ENCODE measurements at regions of chr2 and their contacts with region 1.

Region 1: DNA sequence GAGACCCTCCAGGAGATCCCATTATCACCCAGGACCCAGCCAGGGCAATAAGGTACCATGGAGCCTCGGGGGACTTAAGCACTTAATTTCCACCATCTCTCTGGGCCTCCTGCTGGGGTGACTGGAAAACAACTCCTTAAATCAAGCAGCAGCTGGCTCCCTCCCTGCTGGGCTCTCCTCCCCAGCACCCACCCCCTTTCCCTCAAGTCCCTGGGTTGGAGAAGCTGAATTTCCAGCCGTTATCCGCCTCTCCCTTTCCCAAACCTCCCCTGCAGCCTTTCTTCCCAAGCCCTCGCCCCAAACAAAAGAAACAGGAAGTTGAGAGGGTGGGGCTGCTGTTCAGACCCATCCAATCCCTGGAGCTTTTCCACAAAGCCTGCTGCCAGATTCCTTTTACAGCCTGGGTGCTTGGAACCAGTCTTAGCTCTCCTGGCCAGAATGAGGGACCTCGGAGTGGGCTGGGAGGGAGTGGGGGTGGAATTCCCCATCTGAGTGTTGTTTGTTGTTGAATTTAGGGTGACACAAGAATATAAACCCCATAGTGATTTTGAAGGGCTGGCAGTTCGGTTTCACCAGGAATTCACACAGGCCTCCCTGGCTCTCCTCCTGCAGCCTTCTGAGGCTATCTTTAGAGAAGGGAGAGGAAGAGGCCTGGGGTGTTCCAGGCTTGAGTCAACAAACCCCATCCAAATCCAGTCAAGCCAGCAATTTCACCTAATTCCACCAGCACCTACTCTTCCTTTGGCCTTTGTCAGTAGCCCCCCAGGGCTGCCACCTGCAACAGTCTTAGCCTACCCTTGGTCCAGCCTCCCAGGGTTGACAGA is 32.3 kb downstream of the MARCHF4 start:
- DNase-seq: peak; percentile 44
- H3K4me3 ChIP-seq: no peak overlapping the region
- H3K27me3 ChIP-seq: no peaks in the 10 kb centered on the region
- CTCF ChIP-seq: peak; percentile 42

Region 2: DNA sequence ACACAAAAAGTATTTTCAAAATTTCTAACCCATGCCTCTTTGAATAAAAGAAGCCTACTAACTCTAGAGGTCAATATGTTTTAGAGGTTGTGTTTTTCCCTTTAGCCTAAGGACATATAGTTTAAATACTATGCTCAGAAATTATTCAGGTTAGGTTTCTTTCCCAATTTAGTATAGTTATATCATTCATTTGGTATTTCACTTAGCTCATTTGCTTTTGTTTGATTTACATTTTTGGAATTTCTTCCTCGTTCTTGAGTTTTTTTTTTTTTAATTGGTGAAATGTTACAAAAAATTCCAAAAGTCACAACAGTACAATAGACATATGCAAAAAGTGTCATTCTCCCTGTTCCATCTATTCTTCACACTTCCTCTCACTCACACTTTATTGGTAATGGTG is 891.2 kb after region 1 on chr2:
- CTCF ChIA-PET with region 1: no interaction called
- POLR2A ChIA-PET with region 1: interaction called, 11 read pairs
- DNase-seq: no peak
- H3K4me3 ChIP-seq: no peak overlapping the region
- H3K27me3 ChIP-seq: no peaks in the 10 kb centered on the region
- CTCF ChIP-seq: no peak

Measured in BJ (cell line).